Activated CD4-positive, alpha-beta memory T cell treated with anti-CD3 and anti-CD28 coated beads, Interleukin-2, amount 10 ng/mL, durations not matched to agents 7 days and 5 days (primary cell): ENCODE measurements at regions of chr16 and their contacts with region 1.

Region 1: GRCh38 chr16:53054670-53055485 is at the start of gene CHD9:
- DNase-seq: peak; percentile 79
- H3K4me3 Mint-ChIP-seq: peak within 1 kb of the TSS; percentile 77
- H3K27ac Mint-ChIP-seq: peak within 1 kb of the TSS; percentile 71
- H3K4me1 Mint-ChIP-seq: peaks cover 52% of the 10 kb centered on the region
- H3K27me3 Mint-ChIP-seq: no peaks in the 10 kb centered on the region
- total RNA-seq, gene CHD9: 21.6 to 23.8 TPM

Region 2: DNA sequence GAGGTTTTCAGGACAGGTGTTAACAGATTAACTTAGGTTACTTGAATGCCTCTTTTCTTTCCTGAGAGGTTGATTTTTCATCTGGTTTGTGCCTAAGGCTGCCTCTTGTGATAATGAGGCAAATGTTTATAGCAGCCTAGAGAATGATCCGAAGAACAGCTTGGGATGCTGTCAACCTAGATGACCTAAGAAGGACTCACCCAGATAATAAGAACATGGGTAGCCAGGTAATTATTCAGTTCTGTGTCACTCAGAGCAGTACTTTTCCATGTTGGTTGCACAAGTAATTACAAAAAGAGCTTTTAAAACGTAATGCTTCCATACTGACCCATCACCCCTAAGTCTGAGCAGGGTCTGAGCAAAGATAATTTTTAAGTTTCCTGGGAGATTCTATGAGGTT is 60.2 kb after region 1 on chr16:
- CTCF ChIA-PET with region 1: no interaction called
- POLR2A ChIA-PET with region 1: no interaction called
- DNase-seq: no peak
- H3K4me3 Mint-ChIP-seq: no peak overlapping the region
- H3K27ac Mint-ChIP-seq: no peak overlapping the region
- H3K4me1 Mint-ChIP-seq: no peaks in the 10 kb centered on the region
- H3K27me3 Mint-ChIP-seq: no peaks in the 10 kb centered on the region

Region 3: GRCh38 chr16:53159781-53160436 is 105.0 kb after region 1 on chr16:
- CTCF ChIA-PET with region 1: interaction called, 67 read pairs
- POLR2A ChIA-PET with region 1: interaction called, 4 read pairs
- DNase-seq: no peak
- H3K4me3 Mint-ChIP-seq: no peak overlapping the region
- H3K27ac Mint-ChIP-seq: no peak overlapping the region
- H3K4me1 Mint-ChIP-seq: no peaks in the 10 kb centered on the region
- H3K27me3 Mint-ChIP-seq: no peaks in the 10 kb centered on the region

Region 4: DNA sequence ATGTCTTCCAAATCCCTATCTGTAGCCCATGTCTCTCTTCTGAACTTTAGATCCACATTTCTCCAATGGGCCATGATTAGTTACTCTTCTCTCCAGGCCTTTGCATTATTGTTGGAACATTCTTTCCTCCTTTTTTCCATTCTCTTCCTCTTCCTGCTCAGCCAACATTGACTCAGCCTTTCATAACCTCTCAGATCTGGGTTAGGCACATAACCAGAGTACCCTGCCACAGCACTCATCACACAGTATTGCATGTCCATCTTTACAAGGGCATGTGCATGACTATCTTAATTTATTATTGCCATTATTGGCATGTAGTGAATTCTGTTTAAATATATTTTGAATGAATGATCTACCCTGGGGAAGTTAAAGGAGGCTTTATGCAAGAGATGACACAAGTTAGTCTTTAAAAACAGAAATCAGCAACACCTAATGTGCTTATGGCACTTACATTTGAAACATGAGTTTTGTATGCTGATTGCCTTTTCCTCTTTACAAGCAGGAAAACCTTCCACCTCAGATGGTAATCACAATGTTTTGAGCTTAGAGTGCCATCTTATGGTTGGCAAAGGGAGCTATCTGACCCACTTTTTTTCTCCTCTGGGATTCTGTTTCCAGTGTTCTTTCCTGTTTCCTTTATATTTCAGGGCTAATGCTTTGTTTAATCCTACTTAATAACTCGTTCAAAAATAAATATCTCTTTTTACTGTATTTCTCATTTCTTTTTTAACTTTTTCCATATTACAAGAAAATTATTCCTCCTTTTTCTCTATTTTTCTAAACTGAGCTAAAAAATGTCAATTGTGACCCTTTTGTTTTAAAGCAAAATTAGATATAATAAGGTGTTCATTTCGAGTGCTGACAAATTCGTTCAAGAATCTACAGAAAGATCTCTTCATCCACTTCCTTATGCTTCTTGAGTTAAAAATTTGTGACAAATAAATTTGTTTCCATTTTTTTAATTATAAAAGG is 228.4 kb after region 1 on chr16:
- CTCF ChIA-PET with region 1: interaction called, 25 read pairs
- POLR2A ChIA-PET with region 1: interaction called, 5 read pairs
- DNase-seq: no peak
- H3K4me3 Mint-ChIP-seq: no peak overlapping the region
- H3K27ac Mint-ChIP-seq: no peak overlapping the region
- H3K4me1 Mint-ChIP-seq: no peaks in the 10 kb centered on the region
- H3K27me3 Mint-ChIP-seq: no peaks in the 10 kb centered on the region